Adrenal gland (tissue), 19 donors: ENCODE measurements at regions of chr14 and their contacts with region 1.

Region 1: DNA sequence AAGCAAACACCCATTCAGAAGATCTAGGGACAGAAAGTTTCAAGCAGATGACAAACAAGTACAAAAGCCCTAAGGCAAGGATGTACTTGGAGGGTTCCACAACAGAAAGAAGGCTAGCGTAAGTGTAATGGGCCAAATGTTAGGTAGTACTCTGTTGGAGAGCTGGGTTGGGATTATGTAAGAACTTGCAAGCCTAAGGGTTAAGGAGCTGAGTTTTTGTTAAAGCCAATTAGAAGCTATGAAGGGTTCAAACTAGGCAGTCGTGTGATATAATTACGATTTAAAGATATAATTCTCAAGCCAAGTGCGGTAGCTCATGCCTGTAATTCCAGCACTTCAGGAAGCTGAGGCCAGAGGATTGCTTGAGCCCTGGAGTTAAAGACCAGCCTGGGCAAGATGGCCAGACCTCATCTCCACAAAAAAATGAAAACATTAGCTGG is 41.3 kb downstream of the HECTD1 start:
- DNase-seq: no peak
- H3K4me3 ChIP-seq: no peak overlapping the region
- H3K27ac ChIP-seq: peak overlapping the region; percentile 53 to 81 (median 73)
- H3K4me1 ChIP-seq: peaks cover 10 to 31% of the 10 kb centered on the region in 2 donors
- H3K27me3 ChIP-seq: no peaks in the 10 kb centered on the region
- CTCF ChIP-seq: no peak
- POLR2A ChIP-seq: no peak

Region 2: GRCh38 chr14:31207755-31208545 is 41.7 kb after region 1 on chr14 and contains the start of gene HECTD1:
- intact Hi-C with region 1: loop called in 1 of 2 experiments (anchors 5 kb)
- DNase-seq: peak; percentile 80 to 94 (median 86)
- H3K4me3 ChIP-seq: peak within 1 kb of the TSS; percentile 51 to 97 (median 77)
- H3K27ac ChIP-seq: peak within 1 kb of the TSS; percentile 96 to 99 (median 99)
- H3K4me1 ChIP-seq: peaks cover 17 to 26% of the 10 kb centered on the region in 2 donors
- H3K27me3 ChIP-seq: no peaks in the 10 kb centered on the region
- CTCF ChIP-seq: peak in 5 of 6 experiments; percentile 30 to 96 (median 91)
- POLR2A ChIP-seq: peak; percentile 81 to 85
- total RNA-seq, gene HECTD1: 144 to 309 (median 214) TPM